HepG2 (cell line): ENCODE measurements at regions of chr9 and their contacts with region 1.

Region 1: GRCh38 chr9:70352802-70353201 is 61.7 kb downstream of the KLF9 start:
- DNase-seq: no peak
- ATAC-seq: no peak
- H3K4me3 ChIP-seq: no peak overlapping the region
- H3K27ac ChIP-seq: no peak overlapping the region
- H3K4me1 ChIP-seq: no peaks in the 10 kb centered on the region
- H3K27me3 ChIP-seq: no peaks in the 10 kb centered on the region
- CTCF ChIP-seq: 0 out of 2 replicates have a peak, but pooled peaks have one; percentile 27
- EP300 ChIP-seq: no peak
- POLR2A ChIP-seq: no peak
- RAD21 ChIP-seq: no peak

Region 2: DNA sequence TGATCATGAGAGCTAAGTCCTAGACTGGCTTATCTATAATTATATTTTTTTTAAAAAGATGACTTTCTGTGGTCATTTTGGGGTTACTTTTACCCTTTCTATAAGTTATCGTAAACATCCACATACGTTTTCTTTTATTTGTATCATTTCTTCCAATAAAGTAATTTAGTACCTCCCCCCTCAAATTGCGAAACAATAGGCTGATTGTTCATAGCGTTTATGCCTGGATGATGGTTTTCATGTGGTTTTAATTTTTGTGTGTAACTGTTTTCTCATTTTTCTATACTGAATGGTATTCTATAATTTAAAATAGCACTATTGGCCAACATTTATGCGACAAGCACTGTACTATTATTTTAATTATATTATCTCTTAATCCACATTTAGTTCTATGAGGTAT is 49.5 kb before region 1 on chr9:
- CTCF ChIA-PET with region 1: no interaction called
- POLR2A ChIA-PET with region 1: no interaction called
- in situ Hi-C with region 1: no loop called
- intact Hi-C with region 1: no loop called
- DNase-seq: no peak
- ATAC-seq: no peak
- H3K4me3 ChIP-seq: no peak overlapping the region
- H3K27ac ChIP-seq: no peak overlapping the region
- H3K4me1 ChIP-seq: no peaks in the 10 kb centered on the region
- H3K27me3 ChIP-seq: no peaks in the 10 kb centered on the region
- CTCF ChIP-seq: no peak
- EP300 ChIP-seq: no peak
- POLR2A ChIP-seq: no peak
- RAD21 ChIP-seq: no peak

Region 3: GRCh38 chr9:70382709-70383605 is 30.2 kb after region 1 on chr9:
- CTCF ChIA-PET with region 1: no interaction called
- POLR2A ChIA-PET with region 1: no interaction called
- in situ Hi-C with region 1: no loop called
- intact Hi-C with region 1: loop called (anchors 1 kb)
- DNase-seq: no peak
- ATAC-seq: no peak
- H3K4me3 ChIP-seq: no peak overlapping the region
- H3K27ac ChIP-seq: no peak overlapping the region
- H3K4me1 ChIP-seq: peaks cover 4% of the 10 kb centered on the region; the same call in 1 of the 2 replicates
- H3K27me3 ChIP-seq: no peaks in the 10 kb centered on the region
- CTCF ChIP-seq: no peak
- EP300 ChIP-seq: no peak
- POLR2A ChIP-seq: no peak
- RAD21 ChIP-seq: no peak

Region 4: DNA sequence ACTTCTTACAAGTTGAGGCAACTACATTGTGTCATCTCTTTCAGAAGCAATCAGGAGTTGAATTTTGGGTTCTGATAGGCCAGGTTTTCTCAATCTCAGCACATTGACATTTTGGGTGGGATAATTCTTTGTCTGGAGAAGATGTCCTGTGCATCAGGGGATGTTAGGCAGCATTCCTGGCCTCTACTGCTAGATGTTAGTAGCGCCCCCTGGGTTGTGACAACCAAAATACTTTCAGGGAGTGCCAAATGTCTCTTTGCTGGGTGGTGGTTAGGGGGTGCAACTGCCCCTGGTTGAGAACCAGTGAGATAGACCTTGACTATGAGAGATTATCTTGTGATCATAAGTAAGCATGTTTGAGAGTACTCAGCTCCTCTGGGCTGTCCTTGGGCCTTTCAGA is 225.9 kb after region 1 on chr9:
- CTCF ChIA-PET with region 1: no interaction called
- POLR2A ChIA-PET with region 1: no interaction called
- in situ Hi-C with region 1: no loop called
- intact Hi-C with region 1: no loop called
- DNase-seq: no peak
- ATAC-seq: no peak; the same call in 2 of the 3 replicates
- H3K4me3 ChIP-seq: no peak overlapping the region
- H3K27ac ChIP-seq: no peak overlapping the region
- H3K4me1 ChIP-seq: peaks cover 8% of the 10 kb centered on the region; the same call in 1 of the 2 replicates
- H3K27me3 ChIP-seq: no peaks in the 10 kb centered on the region
- CTCF ChIP-seq: peak; percentile 15; the same call in 1 of the 2 replicates
- EP300 ChIP-seq: no peak
- POLR2A ChIP-seq: no peak
- RAD21 ChIP-seq: no peak

Region 5: GRCh38 chr9:70688704-70689103 is 335.9 kb after region 1 on chr9:
- CTCF ChIA-PET with region 1: no interaction called
- POLR2A ChIA-PET with region 1: no interaction called
- in situ Hi-C with region 1: no loop called
- intact Hi-C with region 1: no loop called
- DNase-seq: no peak
- ATAC-seq: no peak
- H3K4me3 ChIP-seq: no peak overlapping the region
- H3K27ac ChIP-seq: no peak overlapping the region
- H3K4me1 ChIP-seq: no peaks in the 10 kb centered on the region
- H3K27me3 ChIP-seq: no peaks in the 10 kb centered on the region; a peak in 1 of 5 replicates
- CTCF ChIP-seq: no peak
- EP300 ChIP-seq: no peak
- POLR2A ChIP-seq: no peak
- RAD21 ChIP-seq: no peak